Activated naive CD4-positive, alpha-beta T cell treated with anti-CD3 and anti-CD28 coated beads, Interleukin-2, amount 10 ng/mL, durations not matched to agents 7 days and 5 days (primary cell): ENCODE measurements at regions of chr16 and their contacts with region 1.

Region 1: GRCh38 chr16:57045694-57046381 is 46.5 kb upstream of the CPNE2 start:
- DNase-seq: no peak
- H3K4me3 Mint-ChIP-seq: no peak overlapping the region
- H3K27ac Mint-ChIP-seq: peak overlapping the region; percentile 38
- H3K4me1 Mint-ChIP-seq: peaks cover 39% of the 10 kb centered on the region
- H3K27me3 Mint-ChIP-seq: no peaks in the 10 kb centered on the region

Region 2: GRCh38 chr16:56988948-56989945 is 56.6 kb before region 1 on chr16 and contains the start of gene NLRC5:
- CTCF ChIA-PET with region 1: interaction called, 18 read pairs
- DNase-seq: peak; percentile 97
- H3K4me3 Mint-ChIP-seq: peak within 1 kb of the TSS; percentile 100
- H3K27ac Mint-ChIP-seq: peak within 1 kb of the TSS; percentile 100
- H3K4me1 Mint-ChIP-seq: peaks cover 72% of the 10 kb centered on the region
- H3K27me3 Mint-ChIP-seq: peaks cover 3% of the 10 kb centered on the region